H1 (cell line): ENCODE measurements at regions of chr17 and their contacts with region 1.

Region 1: GRCh38 chr17:46894476-46895151 is 28.3 kb upstream of the GOSR2 start:
- DNase-seq: peak in 1 of 2 experiments; percentile 54
- H3K4me3 ChIP-seq: no peak overlapping the region
- H3K27ac ChIP-seq: no peak overlapping the region
- H3K4me1 ChIP-seq: peaks cover 0 to 8% (median 0%) of the 10 kb centered on the region in 4 experiments; a peak in 3 of 7 replicates
- H3K27me3 ChIP-seq: no peaks in the 10 kb centered on the region
- CTCF ChIP-seq: no peak
- EP300 ChIP-seq: no peak
- POLR2A ChIP-seq: no peak
- RAD21 ChIP-seq: no peak

Region 2: DNA sequence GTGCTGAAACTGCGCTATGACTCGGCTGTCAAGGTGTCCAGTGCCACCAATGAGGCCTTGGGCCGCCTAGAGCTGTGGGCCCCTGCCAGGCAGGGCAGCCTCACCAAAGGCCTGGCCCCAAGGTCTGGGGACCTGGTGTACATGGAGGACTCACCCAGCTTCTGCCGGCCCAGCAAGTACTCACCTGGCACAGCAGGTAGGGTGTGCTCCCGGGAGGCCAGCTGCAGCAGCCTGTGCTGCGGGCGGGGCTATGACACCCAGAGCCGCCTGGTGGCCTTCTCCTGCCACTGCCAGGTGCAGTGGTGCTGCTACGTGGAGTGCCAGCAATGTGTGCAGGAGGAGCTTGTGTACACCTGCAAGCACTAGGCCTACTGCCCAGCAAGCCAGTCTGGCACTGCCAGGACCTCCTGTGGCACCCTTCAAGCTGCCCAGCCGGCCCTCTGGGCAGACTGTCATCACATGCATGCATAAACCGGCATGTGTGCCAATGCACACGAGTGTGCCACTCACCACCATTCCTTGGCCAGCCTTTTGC is 18.2 kb before region 1 on chr17:
- CTCF ChIA-PET with region 1: interaction called, 29 read pairs
- POLR2A ChIA-PET with region 1: interaction called, 3 read pairs
- DNase-seq: peak in 1 of 2 experiments; percentile 74
- H3K4me3 ChIP-seq: no peak overlapping the region
- H3K27ac ChIP-seq: no peak overlapping the region
- H3K4me1 ChIP-seq: no peaks in the 10 kb centered on the region
- H3K27me3 ChIP-seq: no peaks in the 10 kb centered on the region; a peak in 2 of 7 replicates
- CTCF ChIP-seq: peak; percentile 73 to 79 (median 74)
- EP300 ChIP-seq: no peak
- POLR2A ChIP-seq: no peak
- RAD21 ChIP-seq: peak; percentile 54 to 68; a peak in 3 of 4 replicates

Region 3: GRCh38 chr17:46908068-46908737 is 13.6 kb after region 1 on chr17:
- CTCF ChIA-PET with region 1: interaction called, 10 read pairs
- POLR2A ChIA-PET with region 1: interaction called, 3 read pairs
- DNase-seq: no peak
- H3K4me3 ChIP-seq: no peak overlapping the region
- H3K27ac ChIP-seq: no peak overlapping the region
- H3K4me1 ChIP-seq: peaks cover 0 to 5% (median 2%) of the 10 kb centered on the region in 4 experiments; a peak in 4 of 7 replicates
- H3K27me3 ChIP-seq: no peaks in the 10 kb centered on the region
- CTCF ChIP-seq: no peak
- EP300 ChIP-seq: no peak
- POLR2A ChIP-seq: no peak
- RAD21 ChIP-seq: no peak